ENCODE measurements at regions of chr4 and their contacts with region 1.

Region 1: GRCh38 chr4:152779513-152780266 is at the starts of genes ARFIP1 and TIGD4:
- DNase-seq: peak; percentile 98
- H3K4me3 Mint-ChIP-seq: peak within 1 kb of the TSS; percentile 95
- H3K27ac Mint-ChIP-seq: peak within 1 kb of the TSS; percentile 85
- H3K4me1 Mint-ChIP-seq: peaks cover 34% of the 10 kb centered on the region
- H3K27me3 Mint-ChIP-seq: peaks cover 3% of the 10 kb centered on the region
- total RNA-seq, gene ARFIP1: 9.3 to 10.5 TPM
- total RNA-seq, gene TIGD4: 0.15 to 0.31 TPM

Region 2: DNA sequence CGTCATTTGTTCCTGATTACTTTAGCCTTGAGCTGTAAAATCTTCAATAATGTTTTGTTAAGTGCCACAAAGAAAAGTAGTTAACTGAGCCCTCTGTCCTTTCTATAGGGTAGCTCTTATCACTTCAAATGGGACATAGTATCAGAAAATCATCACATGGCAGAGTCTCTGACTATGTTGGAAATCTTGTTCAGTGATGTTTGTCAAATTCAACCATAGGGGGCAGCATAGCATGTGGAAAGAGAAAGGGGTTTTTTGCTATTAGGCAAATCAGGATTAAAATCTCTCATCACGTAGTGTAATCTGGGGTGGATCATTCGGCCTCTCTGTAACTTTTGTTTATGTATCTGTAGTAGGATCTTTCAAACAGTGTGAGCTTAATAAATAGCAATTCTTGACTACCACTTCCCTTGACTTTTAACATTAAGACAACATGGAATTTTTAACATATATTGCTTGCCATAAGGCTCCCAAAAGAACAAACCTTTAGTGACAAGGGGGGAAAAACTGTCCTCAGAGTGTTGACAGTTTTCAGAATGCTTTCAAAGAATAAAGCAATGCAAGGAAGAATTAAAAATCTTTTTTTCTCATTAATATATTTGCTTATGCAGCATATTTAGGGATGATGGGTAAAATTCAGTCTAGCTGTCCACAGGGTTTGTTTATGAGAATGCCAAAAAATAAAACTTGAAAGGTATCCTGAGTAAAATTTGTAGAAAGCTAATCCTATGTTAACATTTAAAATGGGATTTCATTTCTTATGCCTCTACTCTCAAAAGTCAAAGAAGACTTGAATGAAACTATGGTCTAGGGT is 371.0 kb before region 1 on chr4:
- CTCF ChIA-PET with region 1: no interaction called
- POLR2A ChIA-PET with region 1: no interaction called
- intact Hi-C with region 1: loop called (anchors 5 kb)
- DNase-seq: no peak
- H3K4me3 Mint-ChIP-seq: no peak overlapping the region
- H3K27ac Mint-ChIP-seq: no peak overlapping the region
- H3K4me1 Mint-ChIP-seq: peaks cover 12% of the 10 kb centered on the region
- H3K27me3 Mint-ChIP-seq: no peaks in the 10 kb centered on the region

Region 3: DNA sequence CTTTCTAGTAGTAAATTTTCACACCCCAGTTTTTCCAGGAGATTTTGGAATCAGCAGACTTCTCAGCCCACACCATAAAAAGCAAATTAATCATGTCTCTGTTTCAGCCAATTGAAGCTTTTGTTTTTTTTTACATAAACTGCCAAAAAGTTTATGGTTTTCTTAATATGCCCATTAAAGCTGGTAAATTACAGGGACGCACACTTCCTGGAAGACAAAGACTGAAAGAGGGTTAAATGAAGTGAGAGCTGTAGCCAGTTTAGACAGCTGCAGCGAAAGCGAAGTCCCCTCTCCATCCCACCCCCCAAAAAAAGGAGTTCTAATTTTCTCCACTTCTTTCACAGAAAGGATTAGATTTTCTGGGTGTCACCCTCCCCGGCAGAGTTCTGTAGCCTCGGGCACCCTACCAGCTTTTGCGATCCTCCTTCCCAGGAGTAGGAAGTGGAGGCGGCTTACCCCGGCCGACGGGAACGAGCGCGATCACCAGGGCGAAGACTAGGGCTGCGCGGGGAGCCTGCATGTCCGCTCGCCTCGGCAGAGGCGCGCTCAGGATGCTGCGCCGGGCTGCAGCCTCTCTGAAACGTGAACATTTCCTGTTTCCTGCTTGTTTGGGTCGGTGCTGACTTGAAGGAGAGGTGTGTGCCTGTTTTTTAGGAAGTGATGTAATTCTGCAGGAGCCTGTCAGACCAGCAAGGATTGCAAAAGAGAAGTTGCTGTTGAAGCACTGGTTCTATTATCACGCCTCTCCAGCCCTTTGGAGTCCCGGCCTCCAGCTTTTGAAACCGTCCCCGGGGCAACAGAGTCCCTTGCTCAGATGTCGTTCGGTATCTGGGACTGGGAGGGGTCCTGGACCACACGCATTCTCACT is 100.0 kb before region 1 on chr4 and contains the start of gene TMEM154:
- CTCF ChIA-PET with region 1: no interaction called
- POLR2A ChIA-PET with region 1: interaction called, 3 read pairs
- intact Hi-C with region 1: loop called (anchors 2 kb)
- DNase-seq: peak; percentile 82
- H3K4me3 Mint-ChIP-seq: peak within 1 kb of the TSS; percentile 91
- H3K27ac Mint-ChIP-seq: peak within 1 kb of the TSS; percentile 84
- H3K4me1 Mint-ChIP-seq: peaks cover 58% of the 10 kb centered on the region
- H3K27me3 Mint-ChIP-seq: no peaks in the 10 kb centered on the region
- total RNA-seq, gene TMEM154: 18.1 to 20.8 TPM

Region 4: GRCh38 chr4:152807294-152807829 is 27.7 kb after region 1 on chr4:
- CTCF ChIA-PET with region 1: no interaction called
- POLR2A ChIA-PET with region 1: interaction called, 3 read pairs
- intact Hi-C with region 1: loop called (anchors 1 kb)
- DNase-seq: no peak
- H3K4me3 Mint-ChIP-seq: peak overlapping the region; percentile 28
- H3K27ac Mint-ChIP-seq: no peak overlapping the region
- H3K4me1 Mint-ChIP-seq: peaks cover 17% of the 10 kb centered on the region
- H3K27me3 Mint-ChIP-seq: no peaks in the 10 kb centered on the region

Region 5: DNA sequence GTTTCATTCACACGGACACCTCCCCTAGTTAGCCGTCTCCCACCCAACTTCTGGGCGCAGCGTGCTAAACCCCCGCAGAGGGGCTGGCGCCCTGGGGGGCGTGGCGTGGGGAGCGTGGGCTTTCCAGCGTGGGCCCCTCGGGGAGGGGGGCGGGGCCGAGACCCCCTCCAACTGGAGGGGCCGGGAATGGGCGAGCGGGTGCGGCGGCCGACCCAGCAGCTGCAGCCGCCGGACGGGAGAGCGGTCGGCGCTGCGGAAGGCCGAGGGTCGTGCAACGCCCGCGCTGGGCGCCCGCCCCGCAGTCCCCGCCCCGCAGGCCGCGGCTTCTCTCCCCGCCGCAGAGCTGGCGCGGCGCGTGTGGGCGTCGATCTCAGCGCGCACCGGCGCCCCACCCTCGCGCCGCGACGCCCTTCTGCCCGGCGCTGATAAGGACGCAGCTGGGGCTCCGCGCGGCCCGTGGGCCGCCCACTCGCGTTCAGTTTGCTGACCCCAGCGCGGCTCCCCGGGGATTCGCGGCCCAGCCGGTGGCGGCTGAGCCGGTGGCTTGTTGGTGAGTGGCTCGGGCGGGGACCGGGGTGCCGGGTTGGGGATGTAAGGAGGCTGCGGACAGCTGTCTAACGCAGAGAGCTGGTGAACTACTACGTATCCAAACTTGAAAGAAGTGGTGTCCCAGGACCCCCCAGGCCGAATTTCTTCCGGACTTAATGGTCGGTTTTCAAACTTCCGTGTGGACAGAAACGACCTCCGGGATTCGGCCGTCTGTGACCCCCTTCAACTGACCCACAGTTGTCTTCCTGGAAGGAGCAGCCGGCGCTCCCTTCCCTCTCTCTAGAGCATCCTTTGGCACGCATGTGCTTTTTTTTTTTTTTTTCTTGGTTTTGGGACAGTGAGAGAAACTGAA is 157.9 kb after region 1 on chr4:
- CTCF ChIA-PET with region 1: interaction called, 4 read pairs
- POLR2A ChIA-PET with region 1: no interaction called
- intact Hi-C with region 1: loop called (anchors 1 kb)
- DNase-seq: peak; percentile 24
- H3K4me3 Mint-ChIP-seq: peak overlapping the region; percentile 64
- H3K27ac Mint-ChIP-seq: no peak overlapping the region
- H3K4me1 Mint-ChIP-seq: peaks cover 12% of the 10 kb centered on the region
- H3K27me3 Mint-ChIP-seq: peaks cover 51% of the 10 kb centered on the region

Measured in activated CD4-positive, alpha-beta memory T cell treated with anti-CD3 and anti-CD28 coated beads for 36 hours (primary cell).